Sciatic nerve (tissue), 2 donors: ENCODE measurements at regions of chr11 and their contacts with region 1.

Region 1: DNA sequence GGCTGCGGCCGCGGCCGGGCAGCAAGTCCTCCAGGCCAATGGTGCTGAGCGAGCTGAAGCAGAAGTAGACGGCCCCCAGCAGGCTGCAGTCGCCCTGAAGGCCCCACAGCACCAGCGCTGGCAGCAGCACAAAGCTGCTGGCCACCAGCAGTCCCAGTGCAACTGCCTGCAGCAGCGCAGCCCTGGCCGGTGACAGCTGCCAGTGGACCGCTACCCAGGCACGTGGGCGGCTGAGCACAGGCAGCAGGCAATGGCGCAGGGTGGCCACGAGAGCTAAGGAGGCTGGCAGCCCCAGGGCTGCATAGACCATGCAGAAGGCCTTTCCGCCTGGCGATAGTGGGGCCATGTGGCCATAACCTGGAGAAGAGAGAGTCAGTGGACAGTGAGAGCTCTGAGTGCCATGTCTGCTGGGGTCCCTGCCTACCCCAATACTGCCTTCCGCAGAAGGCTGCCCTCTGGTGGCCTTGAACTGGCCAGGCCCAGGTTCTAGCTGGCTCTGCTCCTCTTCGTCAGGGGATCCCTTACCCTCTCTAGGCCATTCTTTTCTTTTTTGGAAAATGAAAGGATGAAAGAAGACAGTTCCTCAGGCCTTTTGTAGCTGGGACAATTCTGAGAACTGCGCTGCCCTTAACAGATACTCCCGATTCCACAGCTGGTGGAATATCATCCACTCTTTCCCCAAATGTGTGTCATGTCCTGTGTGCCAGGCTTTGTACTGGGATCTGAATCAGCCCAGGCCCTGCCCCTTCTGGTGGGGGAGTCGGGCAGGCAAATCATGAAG is 1.9 kb downstream of the KCNK7 start:
- DNase-seq: peak; percentile 73
- ATAC-seq: peak; percentile 50

Region 2: GRCh38 chr11:65290448-65291165 is 303.1 kb before region 1 on chr11:
- intact Hi-C with region 1: no loop called
- DNase-seq: peak; percentile 95
- ATAC-seq: peak; percentile 96

Region 3: DNA sequence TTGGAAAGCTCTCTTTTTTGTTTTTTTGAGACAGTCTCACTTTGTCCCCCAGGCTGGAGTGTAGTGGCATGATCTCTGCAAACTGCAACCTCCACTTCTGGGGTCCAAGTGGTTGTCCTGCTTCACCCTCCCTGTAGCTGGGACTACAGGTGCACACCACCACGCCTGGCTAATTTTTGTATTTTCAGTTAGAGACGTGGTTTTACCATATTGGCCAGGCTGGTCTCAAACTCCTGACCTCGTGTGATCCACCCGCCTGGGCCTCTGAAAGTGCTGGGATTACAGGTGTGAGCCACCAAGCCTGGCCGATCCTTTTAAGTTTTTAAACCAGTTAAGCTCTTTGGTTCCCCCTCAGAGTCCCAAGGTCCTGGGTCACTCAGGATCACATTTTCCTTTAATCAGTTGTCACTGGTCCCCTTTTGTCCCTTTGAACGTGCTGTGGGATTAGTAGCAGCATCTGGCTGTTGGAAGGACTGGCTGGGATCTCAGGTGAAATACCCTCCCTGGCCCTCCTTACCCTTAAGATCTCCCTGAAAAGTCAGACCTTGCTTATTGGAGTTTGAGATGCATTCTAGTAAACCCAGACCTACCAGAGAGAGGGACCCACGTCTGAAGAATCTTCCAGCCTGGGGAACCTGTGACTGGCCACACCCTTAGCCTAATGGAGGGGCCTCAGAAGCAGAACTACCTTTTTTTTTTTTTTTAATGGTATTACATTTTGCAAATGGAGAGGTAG is 86.8 kb before region 1 on chr11:
- intact Hi-C with region 1: no loop called
- DNase-seq: peak; percentile 74
- ATAC-seq: peak; percentile 51

Region 4: DNA sequence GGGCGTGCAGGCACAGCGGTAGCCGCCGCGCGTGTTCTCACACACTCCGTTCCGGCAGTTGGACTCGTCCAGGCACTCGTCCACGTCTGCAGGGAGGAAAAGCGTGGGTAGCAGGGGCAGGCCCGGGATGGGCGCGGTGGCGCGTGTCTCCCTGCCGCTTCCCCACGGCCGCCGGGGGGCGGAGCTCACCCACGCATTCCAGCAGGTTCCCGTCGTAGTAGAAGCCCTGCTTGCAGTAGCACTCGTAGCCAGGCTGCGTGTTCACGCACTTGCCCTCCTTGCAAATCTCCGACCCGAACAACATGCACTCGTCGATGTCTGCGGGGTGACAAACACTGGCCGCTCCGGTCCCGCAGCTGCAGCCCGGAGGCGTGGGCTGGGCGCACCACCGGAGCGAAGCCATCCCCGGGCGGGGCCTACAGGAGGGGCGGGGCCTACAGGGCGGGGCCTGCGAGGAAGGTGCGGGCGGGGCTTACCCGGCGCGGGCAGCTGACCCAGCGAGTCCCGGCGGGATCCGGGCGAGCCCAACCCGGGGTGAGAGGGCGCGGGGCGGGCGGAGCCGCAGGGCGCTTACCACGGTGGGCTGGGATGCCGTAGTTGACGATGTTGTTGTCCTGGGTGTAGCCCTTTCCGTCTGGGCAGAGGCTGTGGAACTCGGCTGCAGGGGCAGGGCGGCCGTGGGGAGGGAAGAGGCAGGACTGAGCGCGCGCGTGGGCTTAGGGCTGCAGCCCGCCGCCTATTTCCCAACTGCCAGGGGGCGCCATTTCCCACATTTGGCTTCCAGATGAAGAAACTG is 53.2 kb before region 1 on chr11:
- intact Hi-C with region 1: loop called (anchors 10 kb)
- DNase-seq: peak; percentile 96
- ATAC-seq: peak; percentile 91